ENCODE measurements at regions of chr9 and their contacts with region 1.

Region 1: GRCh38 chr9:31243386-31243785 is 1141.1 kb upstream of the ACO1 start:
- DNase-seq: no peak
- ATAC-seq: no peak
- H3K4me3 ChIP-seq: no peak overlapping the region
- H3K4me3 Mint-ChIP-seq: no peak overlapping the region
- H3K27ac ChIP-seq: no peak overlapping the region
- H3K27ac Mint-ChIP-seq: no peak overlapping the region
- H3K4me1 ChIP-seq: no peaks in the 10 kb centered on the region
- H3K4me1 Mint-ChIP-seq: no peaks in the 10 kb centered on the region
- H3K27me3 ChIP-seq: no peaks in the 10 kb centered on the region
- H3K27me3 Mint-ChIP-seq: no peaks in the 10 kb centered on the region
- CTCF ChIP-seq: no peak

Region 2: GRCh38 chr9:31174681-31175080 is 68.7 kb before region 1 on chr9:
- CTCF ChIA-PET with region 1: no interaction called
- POLR2A ChIA-PET with region 1: no interaction called
- intact Hi-C with region 1: no loop called
- DNase-seq: no peak
- ATAC-seq: no peak
- H3K4me3 ChIP-seq: no peak overlapping the region
- H3K4me3 Mint-ChIP-seq: no peak overlapping the region
- H3K27ac ChIP-seq: no peak overlapping the region
- H3K27ac Mint-ChIP-seq: no peak overlapping the region
- H3K4me1 ChIP-seq: no peaks in the 10 kb centered on the region
- H3K4me1 Mint-ChIP-seq: no peaks in the 10 kb centered on the region
- H3K27me3 ChIP-seq: no peaks in the 10 kb centered on the region
- H3K27me3 Mint-ChIP-seq: no peaks in the 10 kb centered on the region
- CTCF ChIP-seq: no peak

Region 3: DNA sequence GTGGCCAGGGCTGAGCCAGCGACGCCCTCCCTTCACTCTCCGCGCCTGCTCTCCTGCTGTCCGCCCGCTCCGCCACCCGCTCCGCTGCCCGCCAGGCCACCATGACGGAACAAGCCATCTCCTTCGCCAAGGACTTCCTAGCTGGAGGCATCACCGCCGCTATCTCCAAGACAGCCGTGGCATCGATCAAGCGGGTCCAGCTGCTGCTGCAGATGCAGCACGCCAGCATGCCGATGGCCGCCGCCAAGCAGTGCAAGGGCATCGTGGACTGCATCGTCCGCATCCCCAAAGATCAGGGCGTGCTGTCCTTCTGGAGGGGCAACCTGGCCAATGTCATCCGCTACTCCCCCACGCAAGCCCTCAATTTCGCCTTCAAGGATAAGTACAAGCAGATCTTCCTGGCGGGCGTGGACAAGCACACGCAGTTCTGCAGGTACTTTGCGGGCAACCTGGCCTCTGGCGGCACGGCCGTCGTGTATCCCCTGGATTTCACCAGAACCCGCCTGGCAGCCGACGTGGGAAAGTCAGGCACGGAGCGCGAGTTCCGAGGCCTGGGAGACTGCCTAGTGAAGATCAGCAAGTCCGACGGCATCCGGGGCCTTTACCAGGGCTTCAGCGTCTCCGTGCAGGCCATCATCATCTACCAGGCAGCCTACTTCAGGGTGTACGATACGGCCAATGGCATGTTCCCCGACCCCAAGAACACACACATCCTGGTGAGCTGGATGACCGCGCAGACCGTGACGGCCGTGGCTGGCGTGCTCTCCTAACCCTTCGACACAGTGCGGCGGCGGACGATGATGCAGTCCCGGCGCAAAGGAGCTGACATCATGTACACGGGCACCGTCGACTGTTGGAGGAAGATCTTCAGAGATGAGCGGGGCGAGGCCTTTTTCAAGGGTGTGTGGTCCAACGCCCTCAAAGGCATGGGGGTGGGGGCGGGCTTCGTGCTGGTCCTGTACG is 10.7 kb after region 1 on chr9:
- CTCF ChIA-PET with region 1: no interaction called
- POLR2A ChIA-PET with region 1: no interaction called
- intact Hi-C with region 1: loop called in 1 of 2 experiments (anchors 2 kb)
- DNase-seq: no peak
- ATAC-seq: no peak
- H3K4me3 ChIP-seq: no peak overlapping the region
- H3K4me3 Mint-ChIP-seq: no peak overlapping the region
- H3K27ac ChIP-seq: no peak overlapping the region
- H3K27ac Mint-ChIP-seq: no peak overlapping the region
- H3K4me1 ChIP-seq: peaks cover 5% of the 10 kb centered on the region
- H3K4me1 Mint-ChIP-seq: no peaks in the 10 kb centered on the region
- H3K27me3 ChIP-seq: no peaks in the 10 kb centered on the region
- H3K27me3 Mint-ChIP-seq: no peaks in the 10 kb centered on the region
- CTCF ChIP-seq: no peak

Region 4: DNA sequence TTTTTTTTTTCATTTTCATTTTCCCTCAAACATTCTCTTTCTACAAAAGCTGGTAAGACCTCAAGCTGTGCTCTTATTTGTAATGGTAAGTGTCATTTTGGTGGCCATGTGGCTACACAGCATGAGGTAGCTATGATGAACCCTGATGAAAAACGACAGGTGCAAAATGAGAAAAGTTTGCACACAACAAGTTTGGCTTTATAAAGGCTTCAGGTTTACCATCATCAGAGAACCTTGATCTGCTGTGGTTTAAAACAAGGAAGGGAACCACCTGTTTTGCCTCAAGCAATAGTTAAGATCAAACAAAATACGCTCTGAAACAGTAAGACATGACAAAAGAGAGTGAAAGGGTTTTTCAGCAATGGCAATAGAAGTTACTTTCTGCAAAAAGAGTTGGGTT is 16.4 kb after region 1 on chr9:
- CTCF ChIA-PET with region 1: no interaction called
- POLR2A ChIA-PET with region 1: interaction called, 3 read pairs
- intact Hi-C with region 1: loop called in 1 of 2 experiments (anchors 2 kb)
- DNase-seq: peak in 3 of 9 experiments; percentile 6 to 80 (median 56)
- ATAC-seq: peak; percentile 87
- H3K4me3 ChIP-seq: no peak overlapping the region
- H3K4me3 Mint-ChIP-seq: peak overlapping the region; percentile 11
- H3K27ac ChIP-seq: no peak overlapping the region
- H3K27ac Mint-ChIP-seq: peak overlapping the region; percentile 81
- H3K4me1 ChIP-seq: peaks cover 20% of the 10 kb centered on the region
- H3K4me1 Mint-ChIP-seq: peaks cover 12% of the 10 kb centered on the region
- H3K27me3 ChIP-seq: no peaks in the 10 kb centered on the region
- H3K27me3 Mint-ChIP-seq: no peaks in the 10 kb centered on the region
- CTCF ChIP-seq: no peak

Measured in CD8-positive, alpha-beta T cell (primary cell).